Psoas muscle (tissue), 8 donors: ENCODE measurements at regions of chr20 and their contacts with region 1.

Region 1: GRCh38 chr20:57473246-57474048 is 51.5 kb downstream of the CTCFL start:
- DNase-seq: no peak
- ATAC-seq: peak in 1 of 4 donors; percentile 12
- H3K4me3 ChIP-seq: no peak overlapping the region
- H3K27ac ChIP-seq: no peak overlapping the region
- H3K4me1 ChIP-seq: peaks cover 21% of the 10 kb centered on the region
- H3K27me3 ChIP-seq: no peaks in the 10 kb centered on the region
- CTCF ChIP-seq: peak; percentile 7

Region 2: DNA sequence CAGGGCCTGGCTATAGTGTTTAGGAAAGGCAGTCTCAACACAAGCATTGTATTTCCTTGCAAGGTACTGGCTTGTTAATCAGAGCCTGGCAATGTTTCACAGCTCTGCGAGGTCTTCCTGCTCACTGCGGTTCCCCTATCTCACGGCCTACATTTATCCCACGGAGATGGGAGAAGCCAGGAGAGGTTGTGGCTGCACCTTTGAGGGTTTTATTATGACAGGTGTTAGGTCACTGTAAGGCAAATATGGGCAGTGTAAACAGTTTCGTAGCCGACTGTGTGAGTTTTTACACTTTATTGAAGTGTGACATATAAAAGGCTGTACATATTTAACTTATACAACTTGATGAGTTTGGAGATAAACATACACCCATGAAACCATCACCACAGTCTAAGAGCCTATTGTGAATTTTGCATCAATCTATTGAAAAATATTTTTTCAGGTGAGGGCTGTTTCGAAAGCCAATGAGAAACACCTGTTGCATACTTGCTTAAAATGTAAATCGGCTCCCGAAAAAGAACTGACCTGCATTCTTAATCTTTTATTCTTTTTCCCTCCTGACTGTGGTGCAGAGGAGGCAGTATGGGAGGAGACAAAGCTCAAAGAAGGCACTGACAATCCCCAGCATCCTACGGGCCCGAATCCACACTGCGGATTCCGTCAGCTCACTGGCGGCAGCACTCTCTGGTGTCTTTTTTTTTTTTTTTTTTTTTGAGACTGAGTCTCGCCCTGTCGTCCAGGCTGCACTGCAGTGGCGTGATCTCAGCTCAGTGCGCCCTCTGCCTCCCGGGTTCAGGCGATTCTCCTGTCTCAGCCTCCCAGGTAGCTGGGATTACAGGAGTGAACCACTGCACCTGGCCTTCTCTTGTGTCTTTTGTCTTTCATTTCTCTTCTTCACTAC is 89.8 kb before region 1 on chr20:
- intact Hi-C with region 1: loop called (anchors 5 kb)
- DNase-seq: peak in 1 of 2 donors; percentile 27
- ATAC-seq: no peak
- H3K4me3 ChIP-seq: no peak overlapping the region
- H3K27ac ChIP-seq: no peak overlapping the region
- H3K4me1 ChIP-seq: no peaks in the 10 kb centered on the region
- H3K27me3 ChIP-seq: no peaks in the 10 kb centered on the region
- CTCF ChIP-seq: no peak

Region 3: GRCh38 chr20:57388953-57389694 is 84.3 kb before region 1 on chr20:
- intact Hi-C with region 1: loop called (anchors 5 kb)
- DNase-seq: peak; percentile 82 to 88
- ATAC-seq: peak; percentile 58 to 70 (median 66)
- H3K4me3 ChIP-seq: peak overlapping the region; percentile 67
- H3K27ac ChIP-seq: peak overlapping the region; percentile 86
- H3K4me1 ChIP-seq: peaks cover 27% of the 10 kb centered on the region
- H3K27me3 ChIP-seq: no peaks in the 10 kb centered on the region
- CTCF ChIP-seq: peak; percentile 9

Region 4: DNA sequence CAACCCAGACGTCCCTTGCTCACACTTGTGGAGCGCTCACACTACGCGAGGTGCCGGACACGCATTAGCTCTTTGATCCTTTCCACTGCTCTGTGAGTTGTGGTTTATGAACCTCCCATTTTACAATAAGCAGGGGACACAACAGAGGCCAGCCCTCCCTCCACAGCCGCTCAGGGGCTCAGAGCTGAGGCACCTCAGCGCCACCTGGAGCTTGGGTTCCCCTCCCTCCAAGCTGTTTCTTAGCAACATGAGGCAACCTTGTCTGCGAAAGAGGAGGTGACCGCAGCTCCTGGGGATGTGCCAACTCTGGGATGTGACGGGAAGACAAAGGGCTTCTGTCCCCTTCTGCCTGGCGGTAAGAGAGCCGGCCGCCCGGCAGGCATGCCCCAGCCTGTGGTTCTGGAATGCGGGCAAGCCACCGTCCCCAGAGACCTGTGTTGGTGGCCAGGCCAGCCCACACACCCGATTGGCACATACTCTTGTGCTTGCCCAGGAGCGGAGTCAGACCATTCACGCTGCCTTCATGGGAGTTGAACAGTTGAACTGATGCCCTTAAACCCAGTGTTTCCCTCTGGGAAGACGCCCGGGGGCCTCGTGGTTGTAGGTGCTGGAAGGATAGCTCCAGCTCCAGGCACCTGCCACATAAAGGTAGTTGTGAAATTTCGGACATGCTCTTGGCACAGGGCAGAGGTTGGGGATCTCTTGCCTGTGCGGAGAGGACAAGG is 37.8 kb before region 1 on chr20:
- intact Hi-C with region 1: loop called in 1 of 2 experiments (anchors 5 kb)
- DNase-seq: peak; percentile 85 to 90
- ATAC-seq: peak; percentile 40 to 80 (median 70)
- H3K4me3 ChIP-seq: peak overlapping the region; percentile 9
- H3K27ac ChIP-seq: peak overlapping the region; percentile 85
- H3K4me1 ChIP-seq: peaks cover 61% of the 10 kb centered on the region
- H3K27me3 ChIP-seq: no peaks in the 10 kb centered on the region
- CTCF ChIP-seq: no peak